Naive thymus-derived CD4-positive, alpha-beta T cell (primary cell): ENCODE measurements at regions of chr1 and their contacts with region 1.

Region 1: GRCh38 chr1:64966158-64966971 is at the start of gene JAK1:
- DNase-seq: peak; percentile 79 to 94 (median 91)
- ATAC-seq: peak; percentile 91
- H3K4me3 ChIP-seq: peak within 1 kb of the TSS; percentile 93
- H3K4me3 Mint-ChIP-seq: peak within 1 kb of the TSS; percentile 90 to 97 (median 94)
- H3K27ac ChIP-seq: peak within 1 kb of the TSS; percentile 97
- H3K27ac Mint-ChIP-seq: peak within 1 kb of the TSS; percentile 91 to 99 (median 97)
- H3K4me1 ChIP-seq: peaks cover 31 to 41% of the 10 kb centered on the region in 2 donors
- H3K4me1 Mint-ChIP-seq: peaks cover 37 to 55% (median 49%) of the 10 kb centered on the region in 7 donors
- H3K27me3 ChIP-seq: no peaks in the 10 kb centered on the region
- H3K27me3 Mint-ChIP-seq: peaks cover 0 to 3% (median 0%) of the 10 kb centered on the region in 5 donors
- total RNA-seq, gene JAK1: 210 to 365 (median 265) TPM

Region 2: DNA sequence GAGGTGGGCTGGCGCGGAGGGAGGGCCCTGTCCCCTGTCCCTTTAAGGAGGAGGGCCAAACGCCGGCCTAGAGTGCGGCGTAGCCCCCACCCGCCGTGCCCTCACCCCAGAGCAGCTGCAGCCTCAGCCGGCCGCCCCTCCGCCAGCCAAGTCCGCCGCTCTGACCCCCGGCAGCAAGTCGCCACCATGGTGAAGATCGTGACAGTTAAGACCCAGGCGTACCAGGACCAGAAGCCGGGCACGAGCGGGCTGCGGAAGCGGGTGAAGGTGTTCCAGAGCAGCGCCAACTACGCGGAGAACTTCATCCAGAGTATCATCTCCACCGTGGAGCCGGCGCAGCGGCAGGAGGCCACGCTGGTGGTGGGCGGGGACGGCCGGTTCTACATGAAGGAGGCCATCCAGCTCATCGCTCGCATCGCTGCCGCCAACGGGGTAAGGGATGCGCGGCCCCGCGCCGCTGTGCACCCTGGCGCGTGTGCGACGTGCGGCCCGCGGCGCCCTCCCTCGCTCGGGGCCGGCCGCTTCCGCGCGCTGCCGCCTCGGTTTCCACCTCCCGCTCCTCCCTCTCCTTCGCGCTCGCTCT is 1373.0 kb before region 1 on chr1 and contains the start of gene PGM1:
- CTCF ChIA-PET with region 1: no interaction called
- POLR2A ChIA-PET with region 1: no interaction called
- intact Hi-C with region 1: loop called in 1 of 2 experiments (anchors 2 kb)
- DNase-seq: peak; percentile 63 to 81 (median 76)
- ATAC-seq: peak; percentile 91
- H3K4me3 ChIP-seq: peak within 1 kb of the TSS; percentile 71
- H3K4me3 Mint-ChIP-seq: peak within 1 kb of the TSS; percentile 96 to 99 (median 98)
- H3K27ac ChIP-seq: peak within 1 kb of the TSS; percentile 90
- H3K27ac Mint-ChIP-seq: peak within 1 kb of the TSS; percentile 95 to 99 (median 99)
- H3K4me1 ChIP-seq: peaks cover 0 to 7% of the 10 kb centered on the region in 2 donors
- H3K4me1 Mint-ChIP-seq: peaks cover 21 to 49% (median 40%) of the 10 kb centered on the region in 7 donors
- H3K27me3 ChIP-seq: no peaks in the 10 kb centered on the region
- H3K27me3 Mint-ChIP-seq: no peaks in the 10 kb centered on the region
- total RNA-seq, gene PGM1: 11.9 to 57.2 (median 16.1) TPM

Region 3: DNA sequence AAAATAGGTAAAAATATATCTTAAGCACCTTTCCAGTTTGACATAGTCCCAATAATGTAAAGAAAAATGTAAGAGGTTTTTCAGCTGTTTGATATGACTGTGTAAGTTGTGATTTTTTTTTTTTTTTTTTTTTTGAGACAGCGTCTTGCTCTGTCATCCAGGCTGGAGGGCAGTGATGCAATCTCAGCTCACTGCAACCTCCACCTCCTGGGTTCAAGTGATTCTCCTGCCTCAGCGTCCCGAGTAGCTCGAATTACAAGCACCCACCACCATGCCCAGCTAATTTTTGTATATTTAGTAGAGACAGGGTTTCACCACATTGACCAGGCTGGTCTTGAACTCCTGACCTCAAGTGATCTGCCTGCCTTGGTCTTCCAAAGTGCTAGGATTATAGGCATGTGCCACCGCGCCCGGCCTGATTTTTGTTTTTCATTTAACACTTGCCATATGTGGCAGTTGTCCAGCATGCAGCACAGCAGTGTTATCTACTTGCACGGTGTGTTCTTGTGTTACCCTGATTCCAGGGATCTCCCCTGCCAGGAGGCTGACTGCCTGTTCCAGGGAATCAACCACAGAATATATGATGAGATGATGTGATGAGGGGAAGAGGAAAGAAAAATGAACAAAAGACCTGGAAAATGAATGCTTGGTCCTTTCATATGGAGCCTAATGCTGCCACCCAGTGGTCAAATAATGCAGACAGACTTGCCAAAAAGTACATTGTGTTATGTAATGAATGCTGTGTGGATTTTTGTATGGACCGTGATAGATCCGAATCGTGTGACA is 142.5 kb before region 1 on chr1:
- CTCF ChIA-PET with region 1: no interaction called
- POLR2A ChIA-PET with region 1: no interaction called
- intact Hi-C with region 1: loop called in 1 of 2 experiments (anchors 1 kb)
- DNase-seq: peak in 8 of 9 donors; percentile 38 to 74 (median 64)
- ATAC-seq: peak; percentile 80
- H3K4me3 ChIP-seq: no peak overlapping the region
- H3K4me3 Mint-ChIP-seq: peak overlapping the region in 3 of 10 donors; percentile 30 to 44 (median 44)
- H3K27ac ChIP-seq: no peak overlapping the region
- H3K27ac Mint-ChIP-seq: peak overlapping the region in 7 of 9 donors; percentile 5 to 77 (median 39)
- H3K4me1 ChIP-seq: peaks cover 5 to 17% of the 10 kb centered on the region in 2 donors
- H3K4me1 Mint-ChIP-seq: peaks cover 13 to 31% (median 26%) of the 10 kb centered on the region in 7 donors
- H3K27me3 ChIP-seq: no peaks in the 10 kb centered on the region
- H3K27me3 Mint-ChIP-seq: peaks cover 0 to 2% (median 0%) of the 10 kb centered on the region in 5 donors

Region 4: GRCh38 chr1:64923294-64923721 is 43.1 kb before region 1 on chr1:
- CTCF ChIA-PET with region 1: no interaction called
- POLR2A ChIA-PET with region 1: interaction called, 7 read pairs
- intact Hi-C with region 1: loop called (anchors 1 to 2 kb)
- DNase-seq: no peak
- ATAC-seq: peak; percentile 70
- H3K4me3 ChIP-seq: no peak overlapping the region
- H3K4me3 Mint-ChIP-seq: peak overlapping the region; percentile 35 to 74 (median 62)
- H3K27ac ChIP-seq: peak overlapping the region; percentile 9
- H3K27ac Mint-ChIP-seq: peak overlapping the region; percentile 16 to 86 (median 69)
- H3K4me1 ChIP-seq: peaks cover 74 to 75% of the 10 kb centered on the region in 2 donors
- H3K4me1 Mint-ChIP-seq: peaks cover 79 to 100% (median 96%) of the 10 kb centered on the region in 7 donors
- H3K27me3 ChIP-seq: no peaks in the 10 kb centered on the region
- H3K27me3 Mint-ChIP-seq: no peaks in the 10 kb centered on the region

Region 5: DNA sequence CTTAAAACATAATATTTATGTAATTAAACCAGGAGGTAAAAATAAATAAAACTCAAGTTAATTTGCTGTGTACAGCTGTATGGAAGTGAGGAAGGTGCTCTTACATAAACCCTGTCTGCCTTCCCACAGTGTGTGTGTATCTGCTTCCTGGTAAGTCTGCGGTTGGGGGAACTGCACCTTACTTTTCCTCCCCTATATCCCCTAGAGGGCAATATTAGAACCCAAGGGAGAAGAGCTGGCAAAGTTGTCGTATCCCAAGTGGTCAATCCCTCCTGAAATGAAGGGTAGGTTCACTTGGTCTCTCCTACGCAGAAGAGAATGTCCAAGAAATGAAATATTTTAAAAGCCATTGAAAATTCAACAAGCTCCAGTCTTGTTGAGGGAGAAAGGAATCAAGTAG is 17.7 kb after region 1 on chr1:
- CTCF ChIA-PET with region 1: no interaction called
- POLR2A ChIA-PET with region 1: interaction called, 4 read pairs
- intact Hi-C with region 1: loop called in 1 of 2 experiments (anchors 2 kb)
- DNase-seq: no peak
- ATAC-seq: no peak
- H3K4me3 ChIP-seq: no peak overlapping the region
- H3K4me3 Mint-ChIP-seq: no peak overlapping the region
- H3K27ac ChIP-seq: no peak overlapping the region
- H3K27ac Mint-ChIP-seq: no peak overlapping the region
- H3K4me1 ChIP-seq: no peaks in the 10 kb centered on the region
- H3K4me1 Mint-ChIP-seq: peaks cover 0 to 25% (median 14%) of the 10 kb centered on the region in 7 donors
- H3K27me3 ChIP-seq: no peaks in the 10 kb centered on the region
- H3K27me3 Mint-ChIP-seq: peaks cover 0 to 9% (median 0%) of the 10 kb centered on the region in 5 donors

Region 6: GRCh38 chr1:65254319-65255034 is 288.1 kb after region 1 on chr1:
- CTCF ChIA-PET with region 1: no interaction called
- POLR2A ChIA-PET with region 1: no interaction called
- intact Hi-C with region 1: loop called in 1 of 2 experiments (anchors 2 kb)
- DNase-seq: peak; percentile 70 to 90 (median 82)
- ATAC-seq: peak; percentile 97
- H3K4me3 ChIP-seq: peak overlapping the region; percentile 80
- H3K4me3 Mint-ChIP-seq: peak overlapping the region; percentile 87 to 99 (median 92)
- H3K27ac ChIP-seq: peak overlapping the region; percentile 69
- H3K27ac Mint-ChIP-seq: peak overlapping the region in 5 of 9 donors; percentile 10 to 93 (median 78)
- H3K4me1 ChIP-seq: peaks cover 10 to 14% of the 10 kb centered on the region in 2 donors
- H3K4me1 Mint-ChIP-seq: peaks cover 12 to 23% (median 18%) of the 10 kb centered on the region in 7 donors
- H3K27me3 ChIP-seq: no peaks in the 10 kb centered on the region
- H3K27me3 Mint-ChIP-seq: peaks cover 0 to 31% (median 10%) of the 10 kb centered on the region in 5 donors